ENCODE measurements at regions of chr22 and their contacts with region 1.

Region 1: DNA sequence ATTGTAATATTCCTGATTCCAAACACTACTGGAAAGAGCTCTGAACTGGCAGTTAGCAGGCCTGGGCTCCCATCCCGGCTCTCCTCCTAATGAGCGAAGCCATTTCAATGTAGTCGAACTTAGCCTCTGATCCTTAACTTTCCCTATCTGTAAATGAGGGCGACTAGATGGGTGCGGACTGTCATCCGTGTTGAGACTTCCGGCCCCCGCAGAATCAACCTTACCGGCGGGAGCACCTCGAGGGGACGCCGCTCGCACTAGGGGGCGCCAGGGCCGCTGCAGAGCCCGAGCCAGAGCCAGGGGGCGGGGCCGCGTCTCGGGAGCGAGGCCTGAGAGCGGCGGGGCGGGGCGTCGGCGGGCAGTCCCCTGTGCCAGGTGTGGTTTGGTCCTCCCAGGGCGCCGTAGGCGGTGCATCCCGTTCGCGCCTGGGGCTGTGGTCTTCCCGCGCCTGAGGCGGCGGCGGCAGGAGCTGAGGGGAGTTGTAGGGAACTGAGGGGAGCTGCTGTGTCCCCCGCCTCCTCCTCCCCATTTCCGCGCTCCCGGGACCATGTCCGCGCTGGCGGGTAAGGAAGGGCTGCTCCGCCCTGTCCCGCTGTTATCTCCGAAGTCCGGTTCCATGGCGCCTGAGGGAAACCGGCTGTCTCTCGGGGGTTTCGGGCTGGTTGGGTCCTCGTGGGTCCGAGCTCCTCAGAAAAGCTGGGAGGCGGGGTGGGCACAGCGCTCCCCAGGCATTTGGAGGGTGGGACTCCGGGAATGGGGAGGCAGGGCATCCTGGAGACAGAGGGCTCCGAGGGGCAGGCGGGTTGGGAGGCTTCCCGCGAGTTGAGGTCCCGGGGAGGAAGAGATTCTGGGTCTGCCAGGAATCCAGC is at the start of gene LIMK2:
- DNase-seq: peak; percentile 95
- H3K4me3 Mint-ChIP-seq: peak within 1 kb of the TSS; percentile 85
- H3K27ac Mint-ChIP-seq: peak within 1 kb of the TSS; percentile 70
- H3K4me1 Mint-ChIP-seq: peaks cover 40% of the 10 kb centered on the region
- H3K27me3 Mint-ChIP-seq: no peaks in the 10 kb centered on the region
- total RNA-seq, gene LIMK2: 31.1 and 33.9 TPM in 2 replicates

Region 2: GRCh38 chr22:31160328-31160978 is 51.6 kb before region 1 on chr22:
- intact Hi-C with region 1: loop called (anchors 5 kb)
- DNase-seq: no peak
- H3K4me3 Mint-ChIP-seq: peak overlapping the region; percentile 99
- H3K27ac Mint-ChIP-seq: peak overlapping the region; percentile 97
- H3K4me1 Mint-ChIP-seq: peaks cover 16% of the 10 kb centered on the region
- H3K27me3 Mint-ChIP-seq: peaks cover 2% of the 10 kb centered on the region

Region 3: DNA sequence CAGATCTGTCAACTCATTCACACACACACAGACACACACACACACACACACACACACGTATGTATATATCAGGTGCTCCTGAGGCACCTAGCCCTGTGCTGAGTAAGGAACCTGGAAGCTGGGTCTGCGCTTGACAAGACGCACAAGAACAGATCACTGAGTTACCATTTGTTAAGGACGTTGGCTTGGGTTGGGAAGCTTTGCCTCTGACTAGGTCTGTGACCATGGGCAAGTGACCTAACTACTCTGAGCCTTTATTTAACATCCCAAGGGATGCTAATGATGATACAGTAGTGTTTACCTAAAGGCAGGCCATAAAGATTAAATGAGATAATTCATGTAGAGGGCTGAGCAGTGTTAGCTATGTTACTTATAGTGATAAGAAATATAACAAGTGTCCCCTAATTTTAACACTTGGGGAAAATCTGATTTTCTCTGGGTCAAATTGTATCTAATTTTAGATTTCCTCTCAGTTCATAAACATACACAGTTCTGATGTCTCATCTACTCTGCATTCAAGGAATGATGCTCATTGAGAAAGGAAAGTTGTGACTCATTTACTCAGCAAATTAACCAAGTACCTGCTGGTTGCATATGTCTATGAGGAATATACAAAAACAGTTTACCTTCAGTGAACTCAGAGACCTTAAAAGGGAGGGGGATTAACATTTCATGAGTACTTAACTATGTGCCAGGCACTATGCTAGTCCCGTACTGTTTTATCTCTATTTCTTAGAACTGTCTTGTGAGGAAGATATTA is 38.5 kb before region 1 on chr22:
- intact Hi-C with region 1: no loop called
- DNase-seq: no peak
- H3K4me3 Mint-ChIP-seq: no peak overlapping the region
- H3K27ac Mint-ChIP-seq: peak overlapping the region; percentile 60
- H3K4me1 Mint-ChIP-seq: peaks cover 14% of the 10 kb centered on the region
- H3K27me3 Mint-ChIP-seq: no peaks in the 10 kb centered on the region

Region 4: DNA sequence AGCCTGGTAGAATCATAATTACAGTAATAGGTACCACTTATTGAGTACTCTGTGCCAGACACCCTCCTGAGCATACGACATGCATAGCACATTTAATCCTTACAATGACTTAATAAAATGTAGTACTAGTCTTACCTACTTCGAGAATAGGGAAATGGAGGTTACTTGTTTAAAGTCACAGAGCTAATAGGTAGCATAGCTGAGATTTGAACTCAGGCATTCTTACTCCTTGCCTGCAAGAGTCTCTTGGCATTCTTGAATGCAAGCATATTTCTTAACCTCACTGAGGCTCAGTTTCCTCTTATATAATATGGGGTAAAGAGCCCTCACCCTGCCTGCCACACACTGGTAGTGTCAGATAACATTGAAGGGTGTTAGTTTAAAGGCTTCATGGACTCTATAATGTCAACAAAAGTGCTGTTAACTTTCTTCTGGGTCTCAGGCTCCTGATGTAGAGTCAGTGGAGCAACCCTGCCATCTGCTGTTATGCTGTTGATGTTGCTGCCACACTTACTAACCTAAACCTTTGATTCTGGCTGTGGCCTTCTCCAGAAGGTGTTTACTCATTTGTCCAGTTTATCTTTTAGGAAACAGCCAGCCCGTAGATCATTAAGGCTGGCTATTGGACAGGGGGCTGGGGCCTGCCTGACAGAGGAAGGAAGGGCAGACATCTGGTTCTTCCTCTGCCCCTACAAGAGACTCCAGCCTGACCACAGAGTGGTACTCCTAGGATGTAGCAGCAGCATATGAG is 18.9 kb after region 1 on chr22:
- intact Hi-C with region 1: no loop called
- DNase-seq: peak; percentile 22
- H3K4me3 Mint-ChIP-seq: peak overlapping the region; percentile 31
- H3K27ac Mint-ChIP-seq: peak overlapping the region; percentile 66
- H3K4me1 Mint-ChIP-seq: peaks cover 40% of the 10 kb centered on the region
- H3K27me3 Mint-ChIP-seq: no peaks in the 10 kb centered on the region

Region 5: DNA sequence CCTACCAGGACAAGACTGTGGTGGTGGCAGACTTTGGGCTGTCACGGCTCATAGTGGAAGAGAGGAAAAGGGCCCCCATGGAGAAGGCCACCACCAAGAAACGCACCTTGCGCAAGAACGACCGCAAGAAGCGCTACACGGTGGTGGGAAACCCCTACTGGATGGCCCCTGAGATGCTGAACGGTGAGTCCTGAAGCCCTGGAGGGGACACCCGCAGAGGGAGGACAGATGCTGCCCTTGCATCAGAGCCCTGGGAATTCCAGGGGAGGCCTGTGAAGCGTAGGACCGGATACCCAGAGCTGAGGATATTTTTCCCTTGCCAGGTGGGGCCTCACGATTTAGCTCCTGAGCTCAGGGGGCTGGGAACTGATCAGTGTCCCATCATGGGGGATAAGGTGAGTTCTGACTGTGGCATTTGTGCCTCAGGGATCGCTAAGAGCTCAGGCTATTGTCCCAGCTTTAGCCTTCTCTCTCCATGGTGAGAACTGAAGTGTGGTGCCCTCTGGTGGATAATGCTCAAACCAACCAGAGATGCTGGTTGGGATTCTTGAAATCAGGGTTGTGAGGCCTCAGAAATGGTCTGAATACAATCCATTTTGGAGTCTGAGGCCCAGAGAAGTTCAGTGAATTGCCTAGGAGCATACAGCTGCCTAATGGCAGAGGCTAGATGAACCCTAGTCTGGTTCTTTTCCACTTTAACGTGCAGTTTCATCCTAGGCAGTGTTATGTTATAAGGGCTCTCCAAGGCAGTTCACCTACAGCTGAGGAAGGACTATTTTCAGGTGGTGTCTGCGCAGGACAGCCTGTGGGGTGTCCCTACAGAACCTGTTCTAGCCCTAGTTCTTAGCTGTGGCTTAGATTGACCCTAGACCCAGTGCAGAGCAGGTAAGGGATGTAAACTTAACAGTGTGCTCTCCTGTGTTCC is 60.7 kb after region 1 on chr22:
- intact Hi-C with region 1: loop called (anchors 2 kb)
- DNase-seq: no peak
- H3K4me3 Mint-ChIP-seq: no peak overlapping the region
- H3K27ac Mint-ChIP-seq: no peak overlapping the region
- H3K4me1 Mint-ChIP-seq: peaks cover 3% of the 10 kb centered on the region
- H3K27me3 Mint-ChIP-seq: no peaks in the 10 kb centered on the region

Measured in activated T-helper 2 cell treated with anti-CD3 and anti-CD28 coated beads, Interferon-gamma antibody, Interleukin-2, Interleukin-4, amounts not matched to agents 10 μg/mL and 5 μg/mL and 100 μg/mL, durations not matched to agents 14 hours and 24 hours and 36 hours (primary cell).